ENCODE measurements at regions of chr18 and their contacts with region 1.

Region 1: DNA sequence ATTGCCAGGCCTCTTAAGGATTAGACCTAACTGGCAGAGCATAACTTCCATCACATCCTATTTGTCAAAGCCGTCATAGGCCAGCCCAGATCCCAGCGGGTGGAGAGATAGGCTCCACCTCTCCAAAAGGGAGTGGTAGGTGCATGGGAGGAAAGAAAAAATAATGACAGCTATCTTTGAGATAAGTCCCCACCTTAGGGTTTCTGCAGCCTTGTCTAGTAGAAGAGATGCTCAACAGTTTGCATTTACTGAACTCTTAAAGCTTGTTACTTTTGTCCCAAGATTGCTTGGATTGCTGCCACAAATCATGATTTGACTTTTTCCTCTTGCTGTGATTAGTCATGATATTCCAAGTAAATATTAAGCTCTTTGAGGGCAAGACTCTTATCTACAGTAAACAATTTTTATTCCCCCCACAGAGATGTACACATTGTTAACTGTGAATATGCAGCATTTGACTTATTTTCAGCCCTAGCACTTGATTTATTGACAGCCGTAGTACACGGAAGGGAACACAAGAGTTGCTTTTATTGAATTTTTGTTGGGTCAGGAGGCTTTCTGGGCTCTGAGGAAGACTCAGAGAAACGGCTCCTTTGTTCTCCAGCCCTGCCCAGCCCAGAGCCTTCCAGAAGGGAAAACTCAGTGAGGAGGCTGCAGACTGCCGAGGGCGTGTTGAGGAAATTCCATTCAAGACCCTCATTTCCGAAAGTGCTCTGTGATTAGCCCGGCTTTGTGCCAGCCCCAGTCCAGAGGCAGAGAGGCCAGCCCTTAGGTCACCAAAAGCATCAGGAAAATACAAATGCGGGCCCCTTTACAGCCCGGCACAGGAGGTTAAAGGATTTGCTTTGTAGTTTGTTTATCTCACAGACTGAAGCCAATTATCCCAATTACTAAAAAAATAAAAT is 75.5 kb upstream of the ZNF532 start:
- DNase-seq: peak; percentile 96
- H3K4me3 ChIP-seq: peak overlapping the region in 1 of 3 experiments; percentile 5
- H3K27ac ChIP-seq: peak overlapping the region; percentile 98
- H3K4me1 ChIP-seq: peaks cover 43% of the 10 kb centered on the region
- H3K27me3 ChIP-seq: no peaks in the 10 kb centered on the region
- CTCF ChIP-seq: no peak
- POLR2A ChIP-seq: peak; percentile 20

Region 2: DNA sequence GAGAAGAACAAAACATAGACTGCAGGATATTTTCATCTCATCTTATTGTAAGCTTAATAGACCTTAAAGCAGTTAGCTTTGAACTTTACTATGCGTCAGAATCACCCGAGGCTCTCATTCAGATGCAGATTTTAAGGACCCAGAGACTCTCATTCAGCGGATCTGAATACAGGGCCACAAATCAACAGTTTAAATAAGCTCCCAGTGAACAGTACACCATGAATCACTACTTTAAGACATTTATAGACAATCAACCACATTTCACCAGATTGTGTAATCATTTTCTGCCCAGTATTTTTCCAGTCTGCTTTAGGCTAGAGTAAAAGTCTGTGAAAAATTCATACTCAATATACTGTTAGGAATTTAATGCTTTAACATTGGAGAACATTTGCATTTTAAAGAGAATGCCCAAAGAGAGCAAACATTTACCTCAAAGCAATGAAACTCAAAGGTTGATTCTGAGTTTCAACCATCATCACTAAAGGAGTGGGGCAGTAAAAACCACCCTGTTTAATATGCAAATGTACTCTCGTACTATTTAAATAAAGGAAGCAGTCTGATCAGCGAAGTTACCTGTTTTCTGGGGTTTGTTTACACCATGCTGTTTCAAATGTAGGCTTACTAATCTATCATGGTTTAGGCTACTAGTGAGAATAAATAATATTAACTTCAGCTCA is 149.3 kb before region 1 on chr18:
- CTCF ChIA-PET with region 1: no interaction called
- POLR2A ChIA-PET with region 1: no interaction called
- dilution Hi-C with region 1: no loop called
- intact Hi-C with region 1: no loop called
- DNase-seq: no peak
- H3K4me3 ChIP-seq: no peak overlapping the region
- H3K27ac ChIP-seq: no peak overlapping the region
- H3K4me1 ChIP-seq: no peaks in the 10 kb centered on the region
- H3K27me3 ChIP-seq: peaks cover 0 to 2% of the 10 kb centered on the region in 2 experiments
- CTCF ChIP-seq: no peak
- POLR2A ChIP-seq: no peak

Region 3: GRCh38 chr18:58671111-58671631 is 118.1 kb before region 1 on chr18 and contains the start of gene MALT1:
- CTCF ChIA-PET with region 1: no interaction called
- POLR2A ChIA-PET with region 1: no interaction called
- dilution Hi-C with region 1: no loop called
- intact Hi-C with region 1: loop called (anchors 1 kb)
- DNase-seq: peak; percentile 85
- H3K4me3 ChIP-seq: peak within 1 kb of the TSS; percentile 60 to 72 (median 64)
- H3K27ac ChIP-seq: peak within 1 kb of the TSS; percentile 36
- H3K4me1 ChIP-seq: peaks cover 25% of the 10 kb centered on the region
- H3K27me3 ChIP-seq: peaks cover 5% of the 10 kb centered on the region in 2 experiments
- CTCF ChIP-seq: no peak
- POLR2A ChIP-seq: peak; percentile 50
- total RNA-seq, gene MALT1: 5.1 and 8.8 TPM in 2 replicates

Region 4: GRCh38 chr18:58887613-58887963 is 98.4 kb after region 1 on chr18:
- CTCF ChIA-PET with region 1: interaction called, 3 read pairs
- POLR2A ChIA-PET with region 1: no interaction called
- dilution Hi-C with region 1: no loop called
- intact Hi-C with region 1: loop called (anchors 1 kb)
- DNase-seq: peak; percentile 78
- H3K4me3 ChIP-seq: no peak overlapping the region
- H3K27ac ChIP-seq: peak overlapping the region; percentile 43
- H3K4me1 ChIP-seq: peaks cover 18% of the 10 kb centered on the region
- H3K27me3 ChIP-seq: no peaks in the 10 kb centered on the region
- CTCF ChIP-seq: no peak
- POLR2A ChIP-seq: peak; percentile 42

Region 5: GRCh38 chr18:58937071-58937886 is 148.1 kb after region 1 on chr18:
- CTCF ChIA-PET with region 1: no interaction called
- POLR2A ChIA-PET with region 1: no interaction called
- dilution Hi-C with region 1: no loop called
- intact Hi-C with region 1: loop called (anchors 1 kb)
- DNase-seq: peak; percentile 87
- H3K4me3 ChIP-seq: peak overlapping the region in 1 of 3 experiments; percentile 34
- H3K27ac ChIP-seq: peak overlapping the region; percentile 60
- H3K4me1 ChIP-seq: peaks cover 18% of the 10 kb centered on the region
- H3K27me3 ChIP-seq: no peaks in the 10 kb centered on the region
- CTCF ChIP-seq: no peak
- POLR2A ChIP-seq: no peak

Region 6: GRCh38 chr18:59070181-59070912 is 281.1 kb after region 1 on chr18:
- CTCF ChIA-PET with region 1: interaction called, 994 read pairs
- POLR2A ChIA-PET with region 1: no interaction called
- dilution Hi-C with region 1: loop called (anchors 25 kb)
- intact Hi-C with region 1: no loop called
- DNase-seq: peak; percentile 78
- H3K4me3 ChIP-seq: no peak overlapping the region
- H3K27ac ChIP-seq: no peak overlapping the region
- H3K4me1 ChIP-seq: no peaks in the 10 kb centered on the region
- H3K27me3 ChIP-seq: peaks cover 2 to 3% of the 10 kb centered on the region in 2 experiments
- CTCF ChIP-seq: peak; percentile 90
- POLR2A ChIP-seq: no peak

Measured in endothelial cell of umbilical vein (primary cell).